ENCODE measurements at regions of chr2 and their contacts with region 1.

Region 1: DNA sequence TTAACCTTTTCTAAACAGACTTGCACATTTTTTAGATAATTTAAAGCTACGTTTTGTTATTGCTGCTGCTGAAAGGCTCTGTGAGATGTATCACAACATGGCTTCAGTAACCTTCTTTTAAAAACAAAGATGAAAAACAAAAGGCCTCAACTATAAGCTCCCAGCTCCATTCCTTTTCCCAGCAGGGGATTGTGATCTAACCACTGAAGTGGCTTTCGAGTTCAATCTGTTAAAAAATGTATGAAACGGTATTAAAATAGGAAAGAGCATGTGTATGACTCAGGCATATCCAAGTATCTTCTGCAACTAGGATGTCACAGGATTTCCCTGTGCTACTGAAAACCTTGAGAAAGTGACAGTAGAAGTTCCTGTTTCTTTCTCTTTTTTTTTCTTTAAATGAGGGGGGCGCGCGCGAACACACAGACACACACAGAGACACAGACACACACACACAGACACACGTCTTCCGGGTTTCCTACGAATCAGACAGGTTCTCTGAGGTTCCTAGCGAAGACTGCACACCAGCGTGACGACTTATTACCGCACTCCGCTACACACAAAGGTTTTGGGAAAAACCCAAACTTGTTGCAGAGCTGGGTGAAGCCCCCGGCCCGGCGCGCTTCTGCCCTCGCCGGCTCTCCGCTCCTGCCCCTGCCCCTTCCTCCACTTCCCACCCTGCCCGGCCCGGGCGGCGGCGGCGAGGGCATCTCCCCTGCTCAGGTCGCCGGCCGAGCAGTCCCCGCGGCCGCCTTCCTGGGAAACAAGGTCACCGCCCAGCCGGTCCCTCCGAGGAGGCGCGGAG is 86.8 kb downstream of the RBMS1 start:
- DNase-seq: peak; percentile 52 to 58
- ATAC-seq: peak; percentile 32 to 48 (median 38)
- H3K4me3 ChIP-seq: peak overlapping the region; percentile 94
- H3K27ac ChIP-seq: peak overlapping the region; percentile 88
- H3K4me1 ChIP-seq: peaks cover 62% of the 10 kb centered on the region
- H3K27me3 ChIP-seq: no peaks in the 10 kb centered on the region
- CTCF ChIP-seq: no peak

Region 2: DNA sequence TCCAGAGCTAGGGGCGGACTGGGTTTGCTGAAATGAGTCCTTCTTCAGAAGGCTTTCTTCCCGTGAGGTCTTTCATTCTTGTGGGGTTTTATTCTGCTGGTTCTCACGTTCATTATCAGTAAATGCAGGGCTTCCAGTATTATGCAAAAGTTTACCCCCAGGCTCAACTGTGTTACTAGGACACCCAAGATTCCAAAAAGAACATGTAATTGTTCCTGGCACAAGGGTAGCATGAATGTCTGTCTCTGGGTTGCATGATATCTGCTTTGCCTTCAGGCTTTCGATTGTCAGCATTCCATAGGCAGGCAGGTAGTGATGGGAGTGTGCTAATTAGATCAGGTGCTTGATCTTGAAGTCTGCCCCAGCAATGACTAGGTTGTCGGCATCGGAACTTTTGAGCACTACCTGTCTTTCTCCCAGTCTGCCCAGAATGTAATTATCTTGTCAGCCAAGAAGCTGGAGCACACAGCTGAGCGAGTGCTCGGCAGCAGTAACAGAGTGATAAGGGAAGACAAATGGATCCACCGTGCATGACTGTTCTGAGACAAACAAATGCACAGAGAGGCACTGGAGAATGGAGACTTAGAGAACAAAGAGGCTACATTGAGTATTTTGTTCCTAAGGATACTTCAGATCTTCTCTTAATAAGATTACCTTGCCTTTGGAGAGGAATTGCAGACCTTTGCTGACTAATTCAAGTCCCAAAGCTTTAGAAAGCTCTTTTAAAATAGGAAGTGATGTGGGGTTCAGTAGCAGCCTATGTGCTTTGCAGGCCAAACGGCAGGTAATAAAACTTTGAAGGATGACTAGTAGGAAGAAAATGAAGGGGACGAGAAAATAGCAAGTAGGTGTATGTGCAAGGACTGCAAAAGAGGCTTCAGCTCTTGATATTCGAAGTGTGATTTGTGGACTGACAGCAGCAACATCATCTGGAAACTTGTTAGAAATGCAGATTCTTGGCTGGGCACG is 248.6 kb before region 1 on chr2:
- intact Hi-C with region 1: no loop called
- DNase-seq: no peak
- ATAC-seq: peak in 3 of 4 donors; percentile 25 to 54 (median 33)
- H3K4me3 ChIP-seq: no peak overlapping the region
- H3K27ac ChIP-seq: peak overlapping the region; percentile 56
- H3K4me1 ChIP-seq: no peaks in the 10 kb centered on the region
- H3K27me3 ChIP-seq: no peaks in the 10 kb centered on the region
- CTCF ChIP-seq: no peak

Region 3: DNA sequence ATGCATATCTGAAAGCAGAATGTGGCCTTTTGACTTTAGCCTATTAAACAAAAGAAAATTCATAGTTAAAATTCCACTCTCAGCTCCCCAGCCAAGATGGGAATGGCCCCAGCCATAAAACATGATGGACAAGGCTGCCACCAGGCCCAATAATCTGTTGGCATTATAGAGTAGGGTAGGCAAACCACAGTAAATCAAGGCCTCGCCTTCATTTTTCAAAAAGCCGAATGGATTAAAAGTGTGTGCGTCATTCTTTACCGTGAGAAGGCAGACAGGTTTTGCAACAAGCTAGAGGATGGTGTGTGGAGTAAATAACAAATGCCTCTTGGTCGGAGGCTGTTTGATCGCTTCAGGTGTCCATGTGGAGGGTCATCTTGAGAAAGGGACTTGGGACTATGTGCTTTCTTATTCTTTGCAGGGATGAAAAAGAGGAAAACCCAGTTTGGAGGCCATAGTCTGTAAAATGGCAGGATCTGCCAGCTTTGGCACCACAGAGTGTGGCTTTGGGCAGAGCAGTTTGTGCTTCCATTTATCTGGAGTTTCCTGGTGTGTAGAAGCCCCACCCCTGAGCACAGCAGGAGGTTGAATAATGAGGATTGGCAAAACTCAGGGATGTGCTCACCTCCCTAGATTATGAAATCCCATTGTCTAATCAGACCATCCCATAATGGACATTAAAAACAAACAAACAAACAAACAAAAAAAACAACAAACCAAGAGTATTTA is 149.6 kb before region 1 on chr2:
- intact Hi-C with region 1: no loop called
- DNase-seq: no peak
- ATAC-seq: no peak
- H3K4me3 ChIP-seq: no peak overlapping the region
- H3K27ac ChIP-seq: no peak overlapping the region
- H3K4me1 ChIP-seq: peaks cover 18% of the 10 kb centered on the region
- H3K27me3 ChIP-seq: no peaks in the 10 kb centered on the region
- CTCF ChIP-seq: no peak

Region 4: GRCh38 chr2:160317181-160318099 is 89.4 kb before region 1 on chr2:
- intact Hi-C with region 1: loop called (anchors 5 to 10 kb)
- DNase-seq: no peak
- ATAC-seq: no peak
- H3K4me3 ChIP-seq: no peak overlapping the region
- H3K27ac ChIP-seq: peak overlapping the region; percentile 84
- H3K4me1 ChIP-seq: peaks cover 57% of the 10 kb centered on the region
- H3K27me3 ChIP-seq: no peaks in the 10 kb centered on the region
- CTCF ChIP-seq: no peak

Region 5: GRCh38 chr2:160324161-160324800 is 82.5 kb before region 1 on chr2:
- intact Hi-C with region 1: loop called (anchors 5 to 10 kb)
- DNase-seq: peak; percentile 50 to 64
- ATAC-seq: peak; percentile 51 to 80 (median 70)
- H3K4me3 ChIP-seq: no peak overlapping the region
- H3K27ac ChIP-seq: peak overlapping the region; percentile 9
- H3K4me1 ChIP-seq: peaks cover 46% of the 10 kb centered on the region
- H3K27me3 ChIP-seq: no peaks in the 10 kb centered on the region
- CTCF ChIP-seq: peak; percentile 77

Region 6: GRCh38 chr2:160371251-160372009 is 35.4 kb before region 1 on chr2:
- intact Hi-C with region 1: loop called in 1 of 2 experiments (anchors 5 kb)
- DNase-seq: no peak
- ATAC-seq: peak in 1 of 4 donors; percentile 21
- H3K4me3 ChIP-seq: no peak overlapping the region
- H3K27ac ChIP-seq: peak overlapping the region; percentile 49
- H3K4me1 ChIP-seq: peaks cover 99% of the 10 kb centered on the region
- H3K27me3 ChIP-seq: no peaks in the 10 kb centered on the region
- CTCF ChIP-seq: no peak

Region 7: DNA sequence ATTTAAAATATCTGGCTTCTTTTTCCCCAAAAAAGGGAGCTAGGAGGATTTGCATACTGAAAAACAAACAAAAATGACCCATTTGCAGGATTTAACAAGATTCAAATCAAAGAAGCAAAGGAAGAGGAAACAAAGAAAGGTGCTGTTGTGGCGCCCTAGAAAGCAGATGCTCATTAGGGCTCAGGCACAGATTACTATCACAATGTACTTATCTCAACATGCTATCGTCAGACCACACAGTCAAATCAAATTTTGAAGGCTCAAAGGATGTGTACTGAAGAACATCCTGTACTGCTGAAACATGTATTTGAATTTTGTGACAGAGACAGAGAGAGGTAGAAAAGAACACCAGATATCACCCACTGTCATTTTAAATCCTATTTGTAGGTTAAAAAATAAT is 75.9 kb after region 1 on chr2:
- intact Hi-C with region 1: no loop called
- DNase-seq: no peak
- ATAC-seq: peak in 1 of 4 donors; percentile 53
- H3K4me3 ChIP-seq: no peak overlapping the region
- H3K27ac ChIP-seq: no peak overlapping the region
- H3K4me1 ChIP-seq: peaks cover 19% of the 10 kb centered on the region
- H3K27me3 ChIP-seq: no peaks in the 10 kb centered on the region
- CTCF ChIP-seq: no peak